ENCODE measurements at regions of chr1 and their contacts with region 1.

Region 1: GRCh38 chr1:151510957-151511635 is at the start of gene CGN:
- DNase-seq: peak; percentile 96

Region 2: GRCh38 chr1:151443846-151444782 is 67.0 kb before region 1 on chr1:
- CTCF ChIA-PET with region 1: interaction called, 5 read pairs
- POLR2A ChIA-PET with region 1: interaction called, 11 read pairs
- DNase-seq: peak; percentile 85

Region 3: DNA sequence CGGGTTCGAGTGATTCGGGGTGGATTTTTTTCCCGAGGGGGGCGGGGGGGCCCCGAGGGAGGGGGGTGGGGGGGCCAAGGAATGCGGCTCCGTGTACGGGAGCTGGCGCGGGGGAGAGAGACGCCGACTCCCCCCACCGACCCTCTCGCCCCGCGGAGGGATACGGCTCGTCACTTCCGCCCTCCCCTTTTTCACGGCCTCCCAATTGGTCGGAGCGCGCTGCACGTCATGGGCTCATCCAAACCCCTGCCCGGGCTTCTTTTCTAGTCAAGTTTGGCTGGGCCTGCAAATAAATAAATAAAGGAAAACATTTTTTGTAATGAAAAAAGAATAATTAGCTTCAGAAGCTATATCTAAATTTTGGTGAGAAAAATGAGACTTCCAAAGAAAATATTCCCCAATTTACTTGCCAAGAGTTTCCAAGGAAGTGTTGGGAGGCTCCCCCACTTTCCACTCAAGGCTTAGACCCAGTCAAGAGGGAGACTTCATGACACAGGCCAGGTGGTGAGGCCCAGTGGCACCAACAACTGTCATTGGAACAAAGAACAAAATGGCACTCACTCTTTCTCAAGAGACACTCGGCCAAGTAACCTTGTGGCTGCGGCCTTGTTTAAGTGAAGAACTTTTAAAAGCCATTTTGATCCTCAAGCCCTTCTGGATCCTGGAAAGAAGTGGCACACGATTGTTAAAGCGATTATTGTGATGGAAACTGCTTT is 51.6 kb before region 1 on chr1 and contains the start of gene POGZ:
- CTCF ChIA-PET with region 1: interaction called, 6 read pairs
- POLR2A ChIA-PET with region 1: interaction called, 11 read pairs
- DNase-seq: peak; percentile 95

Region 4: GRCh38 chr1:151465026-151465425 is 46.1 kb before region 1 on chr1:
- CTCF ChIA-PET with region 1: interaction called, 3 read pairs
- POLR2A ChIA-PET with region 1: interaction called, 11 read pairs
- DNase-seq: no peak

Region 5: DNA sequence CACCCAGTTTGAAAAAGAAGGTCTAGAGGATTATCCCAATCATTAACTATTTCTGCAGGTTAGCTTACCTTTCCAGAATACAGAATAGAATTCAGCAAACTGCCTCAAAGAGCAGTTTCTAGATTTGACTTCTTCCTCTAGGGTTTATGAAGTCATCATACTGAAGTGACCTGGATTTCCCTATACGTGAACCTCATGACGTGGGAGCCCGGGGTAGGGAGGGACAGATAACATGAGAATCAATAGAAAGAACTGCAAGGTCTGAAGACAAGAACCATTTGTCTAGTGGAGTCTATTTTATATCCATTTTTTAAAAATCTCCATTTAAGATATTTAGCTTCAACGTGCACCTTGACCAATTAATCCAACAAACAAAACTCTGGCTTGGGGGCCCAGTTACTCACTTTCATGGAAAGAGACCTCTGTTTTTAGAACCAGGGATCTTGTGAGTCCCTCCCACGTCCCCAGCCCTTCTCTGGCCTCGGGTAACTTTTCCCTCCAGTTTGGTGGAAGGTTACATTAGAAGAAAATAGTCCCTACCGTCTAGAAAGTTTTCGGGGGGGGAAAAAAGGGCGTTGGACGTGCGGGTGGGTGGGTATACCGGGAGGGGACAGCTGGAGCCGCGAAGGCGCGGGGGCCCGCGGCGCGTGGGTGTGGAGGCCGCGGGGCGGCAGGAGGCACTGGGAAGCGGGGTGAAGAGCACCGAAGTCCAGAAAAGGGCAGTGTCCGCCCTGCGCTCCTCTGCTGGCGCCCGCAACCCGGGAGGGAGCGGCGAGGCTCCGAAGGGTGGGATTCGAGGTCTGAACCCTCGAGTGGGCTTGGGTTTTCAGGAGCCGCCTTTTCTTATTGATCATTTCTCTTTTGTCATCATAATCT is 38.0 kb before region 1 on chr1:
- CTCF ChIA-PET with region 1: no interaction called
- POLR2A ChIA-PET with region 1: interaction called, 15 read pairs
- DNase-seq: no peak

Region 6: DNA sequence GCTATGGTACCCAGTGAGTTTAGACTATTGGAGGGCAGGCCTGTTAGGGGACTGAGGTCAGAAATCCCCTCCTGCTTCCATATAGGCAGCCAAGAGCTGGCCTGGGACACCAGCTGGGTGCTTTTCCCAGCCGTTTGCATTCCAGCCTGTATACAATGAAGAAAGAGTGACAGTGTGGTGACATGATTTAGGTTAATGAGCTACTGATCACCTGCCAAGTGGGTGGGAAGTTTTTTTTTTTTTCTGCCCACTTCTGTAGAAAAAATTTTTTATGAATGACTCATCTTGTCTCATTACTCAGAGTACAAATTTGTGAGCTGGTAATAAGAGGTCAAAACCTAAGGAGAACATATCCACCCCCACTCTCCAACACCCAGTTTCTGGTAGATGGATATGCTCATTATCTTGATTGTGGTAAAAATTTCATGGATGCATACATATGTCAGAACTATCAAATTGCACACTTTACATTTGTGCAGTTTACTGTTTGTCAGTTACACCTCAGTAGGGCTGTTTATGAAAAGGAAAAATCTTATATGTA is 16.3 kb before region 1 on chr1:
- CTCF ChIA-PET with region 1: no interaction called
- POLR2A ChIA-PET with region 1: interaction called, 22 read pairs
- DNase-seq: no peak

Region 7: DNA sequence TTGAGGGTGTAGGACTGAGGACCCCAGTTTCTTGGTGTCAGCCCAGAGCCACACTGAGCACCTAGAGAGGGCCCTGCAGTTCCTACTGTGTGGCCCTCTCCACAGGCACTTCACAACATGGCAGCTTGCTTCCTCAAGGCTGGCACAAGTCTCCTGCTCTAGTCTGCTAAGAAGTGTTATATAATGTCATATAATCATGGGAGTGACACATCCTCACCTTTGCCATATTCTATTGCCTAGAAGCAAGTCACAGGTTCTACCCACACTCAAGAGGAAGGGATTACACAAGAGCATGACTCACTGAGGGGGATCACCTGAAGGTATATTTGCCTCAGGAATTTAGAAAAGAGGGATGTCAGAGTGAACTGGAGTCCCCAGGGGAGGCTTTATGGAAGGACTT is 95.3 kb after region 1 on chr1:
- CTCF ChIA-PET with region 1: no interaction called
- POLR2A ChIA-PET with region 1: no interaction called
- DNase-seq: no peak